BJ (cell line): ENCODE measurements at regions of chr19 and their contacts with region 1.

Region 1: DNA sequence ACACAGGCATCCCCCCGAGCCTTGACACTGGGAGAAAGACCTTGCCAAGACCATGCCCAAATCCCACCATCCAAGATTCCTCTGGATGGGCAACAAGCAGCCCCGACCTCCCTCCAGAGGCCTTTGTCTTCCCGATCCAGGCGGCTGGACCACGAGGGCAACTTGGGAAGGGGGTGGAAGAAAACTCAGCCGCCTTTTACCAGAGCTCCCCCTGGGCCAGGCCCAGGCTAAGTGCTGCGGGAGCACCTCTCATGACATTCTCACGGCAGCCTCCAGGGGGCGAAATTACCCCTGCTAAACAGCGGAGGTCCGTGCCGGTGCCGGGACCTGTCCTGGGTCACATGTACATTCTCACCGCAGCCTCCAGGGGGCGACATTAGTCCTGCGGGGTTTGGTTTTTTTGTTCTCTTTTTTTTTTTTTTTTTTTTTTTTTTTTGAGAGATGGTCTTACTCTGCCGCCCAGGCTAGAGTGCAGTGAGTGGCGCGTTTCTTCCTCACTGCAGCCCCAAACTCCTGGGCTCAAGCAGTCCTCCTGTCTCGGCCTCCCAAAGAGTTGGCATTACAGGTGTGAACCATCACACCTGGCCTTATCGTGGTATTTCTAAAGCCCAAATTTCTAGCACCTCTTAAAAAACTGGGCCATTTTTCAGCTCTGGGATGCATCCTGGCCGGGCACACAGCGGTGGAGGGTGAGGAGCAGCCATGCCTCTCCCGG is 2.1 kb upstream of the RSPH6A start:
- DNase-seq: peak; percentile 63
- H3K4me3 ChIP-seq: no peak overlapping the region
- H3K27me3 ChIP-seq: no peaks in the 10 kb centered on the region
- CTCF ChIP-seq: peak; percentile 99

Region 2: DNA sequence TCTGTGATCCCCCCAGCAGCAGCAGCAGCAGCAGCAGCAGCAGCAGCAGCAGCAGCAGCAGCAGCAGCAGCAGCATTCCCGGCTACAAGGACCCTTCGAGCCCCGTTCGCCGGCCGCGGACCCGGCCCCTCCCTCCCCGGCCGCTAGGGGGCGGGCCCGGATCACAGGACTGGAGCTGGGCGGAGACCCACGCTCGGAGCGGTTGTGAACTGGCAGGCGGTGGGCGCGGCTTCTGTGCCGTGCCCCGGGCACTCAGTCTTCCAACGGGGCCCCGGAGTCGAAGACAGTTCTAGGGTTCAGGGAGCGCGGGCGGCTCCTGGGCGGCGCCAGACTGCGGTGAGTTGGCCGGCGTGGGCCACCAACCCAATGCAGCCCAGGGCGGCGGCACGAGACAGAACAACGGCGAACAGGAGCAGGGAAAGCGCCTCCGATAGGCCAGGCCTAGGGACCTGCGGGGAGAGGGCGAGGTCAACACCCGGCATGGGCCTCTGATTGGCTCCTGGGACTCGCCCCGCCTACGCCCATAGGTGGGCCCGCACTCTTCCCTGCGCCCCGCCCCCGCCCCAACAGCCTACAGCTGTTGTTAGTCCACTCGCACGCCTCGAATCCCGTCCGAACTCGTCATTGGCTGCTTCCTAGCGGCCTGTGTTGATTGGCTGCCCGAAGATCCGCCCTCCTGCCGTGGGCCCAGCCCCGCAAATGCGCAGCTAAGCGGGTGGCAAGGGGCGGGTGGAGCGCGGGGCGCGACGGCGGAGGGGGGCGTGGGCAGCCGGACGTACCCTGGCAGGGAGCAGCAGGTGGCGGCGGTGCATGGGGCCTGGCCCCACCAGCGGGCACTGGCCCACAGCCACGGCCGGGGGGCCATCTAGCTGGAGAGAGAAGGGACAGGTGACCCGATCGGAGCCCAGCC is 46.7 kb before region 1 on chr19:
- CTCF ChIA-PET with region 1: interaction called, 25 read pairs
- POLR2A ChIA-PET with region 1: no interaction called
- DNase-seq: peak; percentile 83
- H3K4me3 ChIP-seq: peak overlapping the region; percentile 42
- H3K27me3 ChIP-seq: no peaks in the 10 kb centered on the region
- CTCF ChIP-seq: peak; percentile 91

Region 3: GRCh38 chr19:45792470-45793177 is 24.5 kb before region 1 on chr19 and contains the start of gene DMWD:
- CTCF ChIA-PET with region 1: interaction called, 111 read pairs
- POLR2A ChIA-PET with region 1: no interaction called
- DNase-seq: peak; percentile 85
- H3K4me3 ChIP-seq: peak within 1 kb of the TSS; percentile 54
- H3K27me3 ChIP-seq: no peaks in the 10 kb centered on the region
- CTCF ChIP-seq: no peak
- polyA plus RNA-seq, gene DMWD: 20.3 and 28.6 TPM in 2 replicates

Region 4: GRCh38 chr19:45834970-45835369 is 17.8 kb after region 1 on chr19:
- CTCF ChIA-PET with region 1: interaction called, 43 read pairs
- POLR2A ChIA-PET with region 1: no interaction called
- DNase-seq: no peak
- H3K4me3 ChIP-seq: no peak overlapping the region
- H3K27me3 ChIP-seq: no peaks in the 10 kb centered on the region
- CTCF ChIP-seq: no peak

Region 5: GRCh38 chr19:45848922-45849321 is 31.8 kb after region 1 on chr19:
- CTCF ChIA-PET with region 1: interaction called, 24 read pairs
- POLR2A ChIA-PET with region 1: no interaction called
- DNase-seq: no peak
- H3K4me3 ChIP-seq: no peak overlapping the region
- H3K27me3 ChIP-seq: no peaks in the 10 kb centered on the region
- CTCF ChIP-seq: peak; percentile 35

Region 6: GRCh38 chr19:46181388-46181779 is 364.2 kb after region 1 on chr19:
- CTCF ChIA-PET with region 1: no interaction called
- POLR2A ChIA-PET with region 1: no interaction called
- DNase-seq: no peak
- H3K4me3 ChIP-seq: no peak overlapping the region
- H3K27me3 ChIP-seq: peaks cover 4% of the 10 kb centered on the region
- CTCF ChIP-seq: no peak